ENCODE measurements at regions of chr19 and their contacts with region 1.

Region 1: DNA sequence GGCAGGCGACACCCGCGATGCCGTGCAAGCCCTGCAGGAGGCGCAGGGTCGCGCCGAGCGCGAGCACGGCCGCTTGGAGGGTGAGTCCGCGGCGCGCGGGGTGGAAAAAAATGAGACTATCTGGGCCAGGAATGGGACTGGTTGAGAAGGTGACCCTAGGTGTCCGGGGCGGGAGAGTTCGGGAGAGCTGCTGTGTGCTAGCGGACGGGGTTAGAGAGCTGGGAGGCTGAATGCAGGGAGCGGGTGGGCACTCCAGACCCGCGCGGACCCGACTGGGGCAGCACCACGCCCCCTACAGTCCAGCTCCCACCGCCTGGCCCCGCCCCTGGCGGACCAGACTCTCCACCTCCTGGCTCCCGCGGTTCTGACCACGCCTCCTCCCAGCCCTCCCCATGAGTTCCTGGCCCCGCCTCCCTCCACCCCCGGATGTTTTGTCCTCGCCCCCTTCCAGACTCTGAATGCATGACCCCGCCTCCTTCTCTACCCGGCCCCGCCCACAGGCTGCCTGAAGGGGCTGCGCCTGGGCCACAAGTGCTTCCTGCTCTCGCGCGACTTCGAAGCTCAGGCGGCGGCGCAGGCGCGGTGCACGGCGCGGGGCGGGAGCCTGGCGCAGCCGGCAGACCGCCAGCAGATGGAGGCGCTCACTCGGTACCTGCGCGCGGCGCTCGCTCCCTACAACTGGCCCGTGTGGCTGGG is 1.5 kb downstream of the CLEC11A start:
- DNase-seq: no peak
- ATAC-seq: no peak
- H3K4me3 ChIP-seq: peak overlapping the region in 1 of 2 experiments; percentile 38; a peak in 1 of 4 replicates
- H3K27ac ChIP-seq: no peak overlapping the region
- H3K4me1 ChIP-seq: no peaks in the 10 kb centered on the region
- H3K27me3 ChIP-seq: no peaks in the 10 kb centered on the region
- CTCF ChIP-seq: no peak

Region 2: GRCh38 chr19:50794439-50795237 is 70.0 kb after region 1 on chr19:
- CTCF ChIA-PET with region 1: no interaction called
- POLR2A ChIA-PET with region 1: interaction called, 15 read pairs
- in situ Hi-C with region 1: no loop called
- intact Hi-C with region 1: no loop called
- DNase-seq: no peak
- ATAC-seq: peak; percentile 67
- H3K4me3 ChIP-seq: no peak overlapping the region
- H3K27ac ChIP-seq: no peak overlapping the region
- H3K4me1 ChIP-seq: no peaks in the 10 kb centered on the region
- H3K27me3 ChIP-seq: no peaks in the 10 kb centered on the region
- CTCF ChIP-seq: peak; percentile 59; the same call in 1 of the 2 replicates

Region 3: GRCh38 chr19:52034051-52034728 is 1309.5 kb after region 1 on chr19:
- CTCF ChIA-PET with region 1: no interaction called
- POLR2A ChIA-PET with region 1: no interaction called
- in situ Hi-C with region 1: no loop called
- intact Hi-C with region 1: no loop called
- DNase-seq: no peak
- ATAC-seq: no peak
- H3K4me3 ChIP-seq: no peak overlapping the region
- H3K27ac ChIP-seq: no peak overlapping the region
- H3K4me1 ChIP-seq: no peaks in the 10 kb centered on the region
- H3K27me3 ChIP-seq: no peaks in the 10 kb centered on the region
- CTCF ChIP-seq: no peak